Heart left ventricle (tissue), 16 donors: ENCODE measurements at regions of chr9 and their contacts with region 1.

Region 1: GRCh38 chr9:108933718-108934322 is at the start of gene ELP1:
- DNase-seq: peak; percentile 93 to 96 (median 96)
- ATAC-seq: peak; percentile 88 to 95 (median 94)
- H3K4me3 ChIP-seq: peak within 1 kb of the TSS; percentile 67 to 99 (median 90)
- H3K27ac ChIP-seq: peak within 1 kb of the TSS; percentile 77 to 96 (median 90)
- H3K4me1 ChIP-seq: peaks cover 0 to 30% (median 19%) of the 10 kb centered on the region in 12 donors
- H3K27me3 ChIP-seq: no peaks in the 10 kb centered on the region
- CTCF ChIP-seq: peak in 8 of 12 donors; percentile 10 to 47 (median 21)
- POLR2A ChIP-seq: no peak
- total RNA-seq, gene ELP1: 12.4 to 32.0 (median 21.1) TPM

Region 2: DNA sequence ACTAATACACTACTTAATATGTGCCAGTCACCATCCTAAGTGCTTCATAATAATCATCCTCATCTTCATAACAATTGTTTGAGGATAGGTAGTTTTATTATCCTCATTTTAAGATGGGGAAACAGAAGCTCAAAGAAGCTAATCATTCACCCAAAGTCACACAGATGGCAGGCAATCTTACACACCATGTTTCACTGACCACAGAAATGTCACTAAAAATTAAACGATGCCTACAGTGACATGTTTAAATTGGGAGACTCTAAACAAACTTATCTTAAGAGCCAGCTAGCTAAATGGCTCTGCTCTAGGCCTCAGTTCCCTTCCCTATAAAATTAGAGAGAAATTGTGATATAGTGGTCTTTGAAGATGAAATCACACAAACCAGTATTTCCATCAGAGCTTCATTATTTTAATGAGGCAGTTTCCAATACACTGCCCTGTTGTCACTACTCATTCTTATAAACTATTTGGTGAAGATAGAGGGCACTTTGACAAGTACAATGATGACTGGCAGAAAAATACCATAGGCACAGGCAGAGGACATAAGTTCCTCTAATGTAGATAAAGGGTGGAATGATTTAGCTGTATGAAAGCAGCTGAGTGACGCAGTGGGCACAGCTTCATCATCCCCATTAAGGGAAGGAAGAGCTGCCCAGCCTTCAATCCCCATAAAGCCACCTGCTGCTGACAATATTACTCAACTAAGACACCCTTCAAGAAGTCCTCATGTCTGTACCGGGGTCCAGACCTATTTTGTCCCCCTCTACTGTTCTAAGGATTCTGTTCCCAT is 302.1 kb before region 1 on chr9:
- intact Hi-C with region 1: no loop called
- DNase-seq: no peak
- ATAC-seq: no peak
- H3K4me3 ChIP-seq: no peak overlapping the region
- H3K27ac ChIP-seq: no peak overlapping the region
- H3K4me1 ChIP-seq: no peaks in the 10 kb centered on the region
- H3K27me3 ChIP-seq: peaks cover 0 to 7% (median 0%) of the 10 kb centered on the region in 9 donors
- CTCF ChIP-seq: no peak
- POLR2A ChIP-seq: no peak

Region 3: DNA sequence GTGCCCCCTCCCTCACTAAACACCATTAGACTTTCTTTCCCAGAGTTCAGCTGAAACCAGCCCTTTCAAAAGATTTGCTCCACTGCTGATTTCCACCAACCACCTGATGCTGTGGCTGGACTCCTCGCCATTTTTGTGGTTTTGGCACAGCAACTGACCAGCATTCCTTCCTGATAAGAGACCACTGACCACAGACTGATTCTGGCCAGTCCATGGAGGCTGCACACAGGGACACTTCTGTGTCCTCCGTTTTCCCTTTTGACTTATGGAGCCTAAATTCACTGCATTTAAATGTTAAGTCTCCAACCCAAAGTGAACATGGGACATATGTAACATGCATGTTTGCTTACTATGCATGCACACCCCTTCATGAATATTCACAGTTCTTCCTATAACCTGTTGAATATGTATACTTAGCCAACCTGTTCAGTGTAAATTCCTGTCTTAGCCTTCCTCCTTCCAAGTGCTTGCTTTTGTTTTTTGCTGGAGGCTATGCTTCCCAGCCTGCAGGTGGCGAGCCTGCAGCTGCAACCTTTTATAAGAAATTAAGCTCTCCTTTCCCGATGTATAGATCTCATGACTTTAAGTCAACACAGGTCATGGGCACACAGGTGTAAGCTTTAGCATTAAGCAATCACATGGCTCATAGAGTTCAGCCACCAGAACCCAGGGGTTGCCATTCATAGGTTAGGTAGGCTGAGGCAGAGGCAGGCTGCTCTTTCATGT is 156.7 kb before region 1 on chr9:
- intact Hi-C with region 1: no loop called
- DNase-seq: no peak
- ATAC-seq: no peak
- H3K4me3 ChIP-seq: no peak overlapping the region
- H3K27ac ChIP-seq: no peak overlapping the region
- H3K4me1 ChIP-seq: peaks cover 0 to 21% (median 5%) of the 10 kb centered on the region in 12 donors
- H3K27me3 ChIP-seq: peaks cover 0 to 6% (median 0%) of the 10 kb centered on the region in 9 donors
- CTCF ChIP-seq: peak in 3 of 12 donors; percentile 4 to 8 (median 5)
- POLR2A ChIP-seq: no peak

Region 4: DNA sequence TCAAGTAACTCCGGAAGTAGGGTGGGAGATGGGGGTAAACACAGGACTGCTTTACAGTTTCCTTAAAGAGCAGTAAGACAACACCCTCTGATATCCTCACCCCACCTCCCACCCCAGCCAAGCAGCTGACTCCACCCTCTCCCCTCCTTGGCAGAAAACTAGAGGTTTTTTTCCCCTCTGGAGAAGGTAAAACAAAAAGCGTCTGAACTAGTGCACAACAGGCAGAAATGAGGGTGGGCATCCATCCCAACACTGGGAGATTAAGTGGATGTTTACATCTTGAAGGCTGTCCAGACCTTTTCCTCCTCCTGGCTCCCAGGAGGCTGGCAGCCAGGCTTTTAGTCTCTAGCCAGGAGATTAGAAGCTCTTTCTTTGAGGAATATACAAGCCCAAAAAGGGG is 93.4 kb after region 1 on chr9:
- intact Hi-C with region 1: loop called in 1 of 10 experiments (anchors 5 kb)
- DNase-seq: no peak
- ATAC-seq: peak in 3 of 4 donors; percentile 28 to 50 (median 50)
- H3K4me3 ChIP-seq: no peak overlapping the region
- H3K27ac ChIP-seq: peak overlapping the region in 3 of 12 donors; percentile 13 to 32 (median 31)
- H3K4me1 ChIP-seq: peaks cover 0 to 43% (median 15%) of the 10 kb centered on the region in 12 donors
- H3K27me3 ChIP-seq: no peaks in the 10 kb centered on the region
- CTCF ChIP-seq: no peak
- POLR2A ChIP-seq: no peak

Region 5: GRCh38 chr9:109035684-109036423 is 102.0 kb after region 1 on chr9:
- intact Hi-C with region 1: loop called in 2 of 10 experiments (anchors 5 to 10 kb)
- DNase-seq: peak in 2 of 5 donors; percentile 32 to 41
- ATAC-seq: peak; percentile 53 to 77 (median 70)
- H3K4me3 ChIP-seq: no peak overlapping the region
- H3K27ac ChIP-seq: peak overlapping the region in 11 of 12 donors; percentile 8 to 63 (median 43)
- H3K4me1 ChIP-seq: peaks cover 0 to 22% (median 15%) of the 10 kb centered on the region in 12 donors
- H3K27me3 ChIP-seq: no peaks in the 10 kb centered on the region
- CTCF ChIP-seq: no peak
- POLR2A ChIP-seq: no peak

Region 6: DNA sequence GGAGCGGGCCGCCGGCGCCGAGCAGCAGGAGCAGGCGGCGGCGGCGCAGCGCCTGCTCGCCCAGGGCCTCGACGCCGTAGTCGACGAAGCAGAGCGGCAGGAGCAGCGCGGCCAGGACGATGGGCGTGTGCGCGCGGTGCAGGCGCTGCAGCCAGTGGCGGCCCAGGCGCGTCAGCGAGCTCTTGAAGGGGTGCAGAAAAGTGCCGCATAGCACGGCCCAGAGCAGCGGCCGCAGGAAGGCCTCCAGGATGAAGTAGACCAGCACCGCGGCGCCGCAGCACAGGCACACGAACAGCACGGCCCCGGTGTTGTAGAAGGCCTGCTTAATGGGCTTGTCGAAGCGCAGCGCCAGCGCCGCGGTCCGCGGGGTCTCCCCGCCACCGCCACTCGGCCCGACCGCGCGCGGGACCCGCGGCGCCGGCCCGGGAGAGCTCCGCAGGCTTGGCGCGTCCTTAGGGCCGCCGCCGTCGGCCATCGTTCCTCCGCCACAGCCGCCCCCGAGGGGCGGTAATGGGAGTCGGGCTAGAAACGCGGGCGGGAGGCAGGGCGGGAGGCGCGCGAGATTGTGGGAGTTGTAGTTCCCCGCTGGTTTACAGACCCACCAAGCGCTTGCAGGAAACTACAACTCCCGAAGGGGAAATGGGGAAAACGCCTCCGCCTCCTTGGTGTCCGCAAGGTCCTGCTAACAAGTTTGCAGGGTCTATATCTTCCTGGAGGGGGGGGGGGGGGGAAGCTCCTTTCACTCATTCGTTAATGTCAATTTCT is 185.8 kb after region 1 on chr9 and contains the start of gene TMEM245:
- intact Hi-C with region 1: loop called in 3 of 10 experiments (anchors 5 to 10 kb)
- DNase-seq: peak; percentile 96 to 98 (median 98)
- ATAC-seq: peak; percentile 96 to 99 (median 98)
- H3K4me3 ChIP-seq: peak within 1 kb of the TSS; percentile 84 to 99 (median 94)
- H3K27ac ChIP-seq: peak within 1 kb of the TSS; percentile 82 to 98 (median 92)
- H3K4me1 ChIP-seq: peaks cover 3 to 46% (median 34%) of the 10 kb centered on the region in 12 donors
- H3K27me3 ChIP-seq: no peaks in the 10 kb centered on the region
- CTCF ChIP-seq: peak in 4 of 12 donors; percentile 4 to 26 (median 13)
- POLR2A ChIP-seq: peak; percentile 79 to 98
- total RNA-seq, gene TMEM245: 84.4 to 174 (median 103) TPM

Region 7: DNA sequence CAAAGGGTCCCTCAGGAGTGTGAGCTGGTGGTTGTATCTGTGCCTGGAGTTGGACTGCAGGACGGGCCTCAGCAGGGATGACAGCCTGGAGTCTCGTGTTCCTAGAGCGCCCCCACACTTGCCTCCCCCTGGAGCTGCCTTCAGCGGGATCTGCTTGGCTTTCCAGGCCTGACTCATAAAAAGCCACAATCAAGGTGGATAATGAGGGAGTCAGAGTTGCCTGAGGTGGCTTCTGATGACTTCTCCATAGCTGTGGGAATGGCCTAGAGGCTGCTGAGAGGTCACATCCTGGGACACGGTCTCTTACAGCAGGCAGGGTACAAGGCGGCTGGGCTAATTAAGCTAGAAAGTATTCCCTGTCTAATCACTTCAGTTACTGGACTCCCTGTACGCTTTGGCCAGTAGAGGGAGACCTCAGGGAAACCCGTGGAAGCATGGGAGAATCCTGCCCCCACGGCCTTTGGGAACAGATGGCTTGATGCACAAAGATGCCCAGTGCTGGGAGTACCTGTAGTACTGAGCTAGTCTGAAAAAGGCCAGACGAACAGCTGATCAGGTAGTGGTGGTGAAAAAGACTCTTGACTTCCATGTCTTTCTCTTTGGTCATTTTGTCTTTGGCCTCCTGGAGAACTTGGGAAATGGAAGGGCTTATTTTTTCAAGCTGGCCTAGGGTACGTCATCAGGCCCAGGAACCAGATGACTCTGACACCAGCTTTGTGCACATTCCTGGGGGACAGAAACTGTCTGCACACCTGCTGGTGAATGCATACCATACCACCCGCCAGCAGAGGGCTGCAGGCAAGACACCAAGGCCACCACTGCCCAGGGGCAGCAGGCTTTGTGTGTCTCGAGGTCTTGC is 249.3 kb after region 1 on chr9:
- intact Hi-C with region 1: no loop called
- DNase-seq: peak in 1 of 5 donors; percentile 33
- ATAC-seq: peak; percentile 22 to 38 (median 28)
- H3K4me3 ChIP-seq: no peak overlapping the region
- H3K27ac ChIP-seq: no peak overlapping the region
- H3K4me1 ChIP-seq: peaks cover 0 to 11% (median 0%) of the 10 kb centered on the region in 12 donors
- H3K27me3 ChIP-seq: no peaks in the 10 kb centered on the region
- CTCF ChIP-seq: peak in 9 of 12 donors; percentile 10 to 38 (median 19)
- POLR2A ChIP-seq: no peak